Activated CD4-positive, alpha-beta T cell treated with anti-CD3 and anti-CD28 coated beads, Interleukin-2, amount 10 ng/mL, durations not matched to agents 24 days and 14 days (primary cell): ENCODE measurements at regions of chr7 and their contacts with region 1.

Region 1: DNA sequence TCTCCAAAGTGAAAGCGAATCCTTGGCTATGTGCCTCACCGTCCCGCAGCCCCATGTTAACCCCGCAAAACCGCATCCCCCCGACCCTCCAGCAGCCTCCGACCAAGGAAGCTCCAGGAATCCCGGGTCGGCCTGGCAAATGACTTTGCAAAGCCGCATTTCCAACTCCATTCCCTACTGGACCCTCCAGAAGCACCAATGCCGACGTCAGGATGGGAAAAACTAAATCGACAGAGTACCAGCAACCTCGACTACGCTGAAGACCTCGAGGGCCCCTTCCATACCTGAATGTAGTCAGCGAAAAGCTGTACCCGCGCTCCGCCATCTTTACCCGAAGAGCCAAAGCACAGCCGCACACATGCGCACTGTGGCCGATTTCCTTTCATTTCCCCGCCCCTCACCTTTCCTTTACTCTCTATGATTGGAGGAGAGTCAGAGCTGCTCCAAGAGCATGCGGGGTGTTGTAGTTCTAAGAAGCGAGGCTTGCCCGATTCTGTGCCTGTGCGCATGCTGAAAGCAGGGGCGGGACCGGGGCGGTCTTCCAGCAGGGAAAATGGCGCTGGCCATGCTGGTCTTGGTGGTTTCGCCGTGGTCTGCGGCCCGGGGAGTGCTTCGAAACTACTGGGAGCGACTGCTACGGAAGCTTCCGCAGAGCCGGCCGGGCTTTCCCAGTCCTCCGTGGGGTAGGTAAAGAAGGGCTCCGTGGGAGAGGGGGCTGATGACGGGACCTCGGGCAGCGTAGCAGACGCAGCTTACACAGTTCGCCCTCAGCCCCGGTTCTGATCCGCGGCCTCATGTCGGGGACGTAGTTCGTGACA is at the starts of genes MRPL32 and PSMA2:
- DNase-seq: peak; percentile 99
- H3K4me3 Mint-ChIP-seq: peak within 1 kb of the TSS; percentile 97
- H3K27ac Mint-ChIP-seq: peak within 1 kb of the TSS; percentile 99
- H3K4me1 Mint-ChIP-seq: peaks cover 53% of the 10 kb centered on the region
- H3K27me3 Mint-ChIP-seq: no peaks in the 10 kb centered on the region
- total RNA-seq, gene MRPL32: 81.6 and 89.1 TPM in 2 replicates
- total RNA-seq, gene PSMA2: 202 and 209 TPM in 2 replicates

Region 2: DNA sequence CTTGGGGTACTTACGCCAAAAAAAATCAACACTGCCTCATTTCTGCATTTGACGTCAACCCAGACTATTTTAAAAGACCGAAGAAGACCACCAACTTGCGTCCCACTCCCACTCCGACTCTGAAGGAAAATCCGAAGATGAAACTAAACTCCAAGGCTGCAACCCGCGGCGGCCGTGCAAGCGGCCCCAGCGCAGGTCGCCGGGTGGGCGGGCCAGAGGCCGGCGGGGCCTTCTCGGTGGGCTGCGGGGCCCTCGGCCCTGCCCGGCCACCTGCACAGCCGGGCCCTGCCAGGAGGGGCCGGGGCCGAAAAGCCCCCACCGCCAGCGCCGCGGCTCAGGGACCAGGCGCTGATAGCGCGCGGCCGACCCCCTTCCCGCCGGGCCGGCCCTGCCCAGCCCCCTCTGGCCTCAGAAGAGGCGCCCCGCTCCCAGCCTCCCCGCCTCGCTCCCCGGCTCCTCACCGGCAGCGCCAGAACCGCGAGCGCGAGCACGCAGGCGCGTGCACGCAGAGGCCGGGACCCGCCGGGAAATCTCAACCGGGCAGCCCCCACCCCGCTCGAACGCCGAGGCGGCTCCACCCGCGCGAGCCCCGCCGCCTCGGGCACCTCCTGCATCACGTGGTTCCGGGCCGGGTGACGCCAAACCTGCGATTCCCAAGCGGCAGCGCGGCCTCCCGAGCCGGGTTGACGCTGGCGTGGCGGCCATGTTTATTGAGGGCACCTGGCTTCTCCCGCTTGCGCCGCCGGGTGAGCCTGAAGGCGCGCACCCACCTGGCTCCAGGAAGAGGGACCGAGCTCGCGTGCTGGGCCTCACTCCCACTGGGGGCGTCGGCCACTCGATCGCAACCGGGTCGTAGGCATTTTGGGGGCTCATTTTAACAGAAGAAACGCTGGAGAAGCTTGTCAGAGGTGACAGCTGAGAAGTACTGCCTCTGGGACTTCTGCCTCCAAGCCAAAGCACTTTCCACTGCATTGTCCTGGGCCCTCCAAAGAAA is 20.3 kb before region 1 on chr7 and contains the start of gene C7orf25:
- intact Hi-C with region 1: loop called (anchors 1 kb)
- DNase-seq: peak; percentile 99
- H3K4me3 Mint-ChIP-seq: peak within 1 kb of the TSS; percentile 97
- H3K27ac Mint-ChIP-seq: peak within 1 kb of the TSS; percentile 94
- H3K4me1 Mint-ChIP-seq: peaks cover 65% of the 10 kb centered on the region
- H3K27me3 Mint-ChIP-seq: no peaks in the 10 kb centered on the region
- total RNA-seq, gene C7orf25: 2.1 and 3.9 TPM in 2 replicates